Activated naive CD4-positive, alpha-beta T cell treated with anti-CD3 and anti-CD28 coated beads for 36 hours (primary cell): ENCODE measurements at regions of chr12 and their contacts with region 1.

Region 1: GRCh38 chr12:54603173-54603814 is 14.8 kb upstream of the PPP1R1A start:
- DNase-seq: peak; percentile 87
- H3K4me3 Mint-ChIP-seq: no peak overlapping the region
- H3K27ac Mint-ChIP-seq: no peak overlapping the region
- H3K4me1 Mint-ChIP-seq: peaks cover 2% of the 10 kb centered on the region
- H3K27me3 Mint-ChIP-seq: no peaks in the 10 kb centered on the region

Region 2: DNA sequence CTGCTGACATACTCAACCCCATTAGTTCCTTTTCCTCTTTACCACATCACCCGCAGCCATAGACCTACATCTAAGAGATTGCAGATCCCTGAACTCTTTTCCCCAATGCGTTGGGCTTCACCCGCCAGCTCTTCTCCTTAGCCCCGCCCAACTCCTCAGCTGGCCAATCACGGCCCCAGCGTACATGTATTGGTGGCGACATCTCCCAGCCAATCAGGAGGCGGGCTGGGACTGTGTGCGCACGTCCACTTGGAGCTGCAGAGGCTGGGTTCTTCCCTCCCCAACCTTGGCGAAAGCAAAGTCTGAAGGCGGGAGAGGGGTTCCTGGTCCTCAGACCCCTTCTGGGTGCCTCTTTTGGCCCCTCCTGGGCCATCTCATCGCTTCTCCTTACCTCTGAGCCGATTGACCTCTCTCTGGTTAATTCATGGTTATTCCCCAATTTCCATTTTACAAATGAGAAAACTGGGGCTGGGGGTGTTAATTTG is 42.9 kb before region 1 on chr12:
- CTCF ChIA-PET with region 1: interaction called, 3 read pairs
- intact Hi-C with region 1: loop called (anchors 1 kb)
- DNase-seq: peak; percentile 97
- H3K4me3 Mint-ChIP-seq: peak overlapping the region; percentile 72
- H3K27ac Mint-ChIP-seq: peak overlapping the region; percentile 80
- H3K4me1 Mint-ChIP-seq: peaks cover 31% of the 10 kb centered on the region
- H3K27me3 Mint-ChIP-seq: peaks cover 3% of the 10 kb centered on the region

Region 3: GRCh38 chr12:54588110-54588889 is 15.0 kb before region 1 on chr12 and contains the start of gene PPP1R1A:
- CTCF ChIA-PET with region 1: interaction called, 96 read pairs
- intact Hi-C with region 1: no loop called
- DNase-seq: no peak
- H3K4me3 Mint-ChIP-seq: peak within 1 kb of the TSS; percentile 36
- H3K27ac Mint-ChIP-seq: no peak within 1 kb of the TSS
- H3K4me1 Mint-ChIP-seq: peaks cover 7% of the 10 kb centered on the region
- H3K27me3 Mint-ChIP-seq: peaks cover 55% of the 10 kb centered on the region
- total RNA-seq, gene PPP1R1A: not detected

Region 4: GRCh38 chr12:54658306-54659264 is 55.3 kb after region 1 on chr12:
- CTCF ChIA-PET with region 1: interaction called, 5 read pairs
- intact Hi-C with region 1: loop called (anchors 1 kb)
- DNase-seq: peak; percentile 72
- H3K4me3 Mint-ChIP-seq: no peak overlapping the region
- H3K27ac Mint-ChIP-seq: no peak overlapping the region
- H3K4me1 Mint-ChIP-seq: no peaks in the 10 kb centered on the region
- H3K27me3 Mint-ChIP-seq: peaks cover 2% of the 10 kb centered on the region